ENCODE measurements at regions of chr11 and their contacts with region 1.

Region 1: DNA sequence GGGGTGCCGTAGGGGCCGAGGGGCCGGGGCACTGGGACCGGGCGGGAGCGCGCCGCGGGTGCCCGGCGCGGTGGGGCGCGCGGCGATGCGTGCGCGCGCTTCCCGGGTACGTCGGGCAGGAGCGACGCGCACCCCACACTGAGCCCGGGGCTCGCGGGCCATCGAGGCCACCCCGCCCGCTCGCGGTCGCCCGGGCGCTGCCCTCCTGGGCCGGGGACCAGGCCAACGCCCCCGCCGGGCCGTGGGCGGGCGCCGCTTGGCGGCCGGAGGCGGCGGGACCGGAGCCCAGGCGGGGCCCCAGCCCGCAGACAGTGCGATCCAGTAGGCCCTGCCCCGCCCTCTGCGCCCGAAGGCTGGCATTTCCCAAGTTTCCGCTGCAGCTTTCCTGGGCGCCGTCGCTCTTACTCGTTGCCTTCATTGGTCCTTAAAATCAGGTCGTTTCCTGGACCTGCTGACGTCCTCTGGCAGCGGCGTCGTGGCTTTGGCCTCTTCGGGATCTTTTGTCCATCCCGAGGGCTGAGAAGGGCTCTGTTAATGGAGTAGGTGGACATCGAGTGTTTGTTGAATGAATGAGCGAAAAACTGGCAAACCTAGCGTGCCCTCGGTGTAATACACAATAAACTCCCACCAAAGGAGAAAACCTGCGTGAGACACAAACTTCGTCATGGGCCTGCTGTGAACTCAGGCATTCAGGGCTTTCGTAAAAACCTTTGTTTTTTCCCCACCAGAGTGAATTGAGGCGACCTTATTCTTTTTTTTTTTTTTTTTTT is 638 bp downstream of the PARVA start:
- DNase-seq: no peak
- H3K4me3 ChIP-seq: peak overlapping the region; percentile 89
- H3K27ac ChIP-seq: peak overlapping the region; percentile 98
- H3K27me3 ChIP-seq: no peaks in the 10 kb centered on the region
- CTCF ChIP-seq: 0 out of 2 replicates have a peak, but pooled peaks have one; percentile 5

Region 2: DNA sequence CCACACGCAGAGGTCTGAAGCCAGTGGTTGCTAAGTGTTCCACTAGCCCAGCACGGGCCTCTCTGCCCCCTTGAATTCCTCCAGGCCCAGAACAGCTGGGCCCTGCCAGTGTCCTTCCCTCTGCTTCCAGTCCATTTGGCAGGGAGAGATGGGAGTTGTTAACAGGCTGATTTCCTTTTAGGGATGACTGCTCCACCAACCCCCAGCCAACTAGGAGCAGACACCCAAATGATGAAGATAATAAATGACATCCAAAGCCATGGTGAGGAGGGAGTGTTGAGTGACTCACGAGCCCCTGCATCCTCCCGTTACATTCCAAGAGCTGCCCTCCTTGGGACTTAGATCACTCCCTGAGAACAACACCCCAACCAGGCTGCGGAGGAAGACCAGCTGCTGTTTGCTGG is 19.9 kb after region 1 on chr11:
- CTCF ChIA-PET with region 1: interaction called, 3 read pairs
- POLR2A ChIA-PET with region 1: interaction called, 24 read pairs
- DNase-seq: peak; percentile 98
- H3K4me3 ChIP-seq: no peak overlapping the region
- H3K27ac ChIP-seq: peak overlapping the region; percentile 87
- H3K27me3 ChIP-seq: no peaks in the 10 kb centered on the region
- CTCF ChIP-seq: no peak

Region 3: DNA sequence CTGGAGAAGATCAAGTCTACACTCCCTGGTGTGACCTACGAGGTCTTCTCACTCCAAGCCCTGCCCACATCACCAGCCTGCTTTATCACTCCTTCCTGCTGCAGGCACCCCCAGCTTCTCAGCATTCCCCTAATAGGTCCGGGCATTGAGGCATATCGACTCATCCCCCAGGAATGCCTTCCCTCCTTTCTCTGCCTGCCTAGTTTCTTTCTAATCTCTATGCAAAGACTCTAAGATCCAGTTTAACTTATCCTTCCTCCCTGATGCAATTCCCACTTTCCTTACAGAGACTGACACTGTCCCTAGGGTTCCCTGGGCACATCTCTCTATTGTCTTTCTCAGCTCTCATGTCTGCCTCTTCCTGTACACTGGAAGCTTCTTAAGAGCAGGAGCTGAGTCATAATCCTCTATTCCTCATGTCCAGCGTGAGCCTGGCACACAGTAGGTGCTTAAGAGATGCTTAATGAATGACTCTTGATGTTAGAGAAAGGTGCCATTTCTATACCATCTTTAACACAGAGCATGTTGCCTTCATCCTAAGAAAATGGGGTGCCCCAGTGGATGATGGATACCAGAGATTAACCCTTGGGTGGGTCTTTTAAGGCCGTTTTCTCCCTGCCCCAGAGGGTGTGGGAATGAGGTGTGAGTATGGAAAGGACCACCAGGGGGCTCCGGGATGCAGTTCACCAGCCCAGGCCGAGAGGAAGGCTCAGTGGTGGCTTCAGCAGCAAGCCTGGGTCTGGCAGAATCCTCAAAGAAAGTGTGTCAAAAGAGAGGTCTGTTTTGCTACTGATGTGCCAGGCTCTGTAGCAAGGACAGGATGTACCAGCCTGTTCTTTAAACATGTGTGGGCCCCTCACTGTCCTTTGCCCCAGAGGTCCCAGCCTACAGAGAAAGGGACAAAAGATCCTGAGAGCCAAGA is 34.1 kb after region 1 on chr11:
- CTCF ChIA-PET with region 1: no interaction called
- POLR2A ChIA-PET with region 1: interaction called, 14 read pairs
- DNase-seq: peak; percentile 85
- H3K4me3 ChIP-seq: no peak overlapping the region
- H3K27ac ChIP-seq: peak overlapping the region; percentile 97
- H3K27me3 ChIP-seq: no peaks in the 10 kb centered on the region
- CTCF ChIP-seq: peak; percentile 85

Region 4: DNA sequence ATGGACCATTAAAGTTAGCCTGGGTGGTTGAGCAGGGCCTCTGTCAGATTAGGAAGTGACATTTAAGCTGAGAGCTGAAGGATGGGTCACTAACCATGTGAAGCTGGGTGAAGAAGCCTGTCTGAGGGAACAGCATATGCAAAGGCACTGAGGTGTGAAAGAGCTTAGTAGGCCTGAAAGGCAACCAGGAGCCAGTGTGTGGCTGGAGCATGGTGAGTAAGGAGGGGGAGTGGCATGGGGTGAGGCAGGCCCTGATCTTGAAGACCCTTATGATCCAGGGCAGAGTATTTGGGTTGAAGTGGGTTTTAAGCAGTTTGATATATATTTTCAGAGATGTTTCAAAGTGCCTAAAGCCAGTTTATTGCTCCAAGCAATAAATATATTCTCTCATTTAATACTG is 48.2 kb after region 1 on chr11:
- CTCF ChIA-PET with region 1: no interaction called
- POLR2A ChIA-PET with region 1: no interaction called
- DNase-seq: no peak
- H3K4me3 ChIP-seq: no peak overlapping the region
- H3K27ac ChIP-seq: no peak overlapping the region
- H3K27me3 ChIP-seq: no peaks in the 10 kb centered on the region
- CTCF ChIP-seq: no peak

Region 5: DNA sequence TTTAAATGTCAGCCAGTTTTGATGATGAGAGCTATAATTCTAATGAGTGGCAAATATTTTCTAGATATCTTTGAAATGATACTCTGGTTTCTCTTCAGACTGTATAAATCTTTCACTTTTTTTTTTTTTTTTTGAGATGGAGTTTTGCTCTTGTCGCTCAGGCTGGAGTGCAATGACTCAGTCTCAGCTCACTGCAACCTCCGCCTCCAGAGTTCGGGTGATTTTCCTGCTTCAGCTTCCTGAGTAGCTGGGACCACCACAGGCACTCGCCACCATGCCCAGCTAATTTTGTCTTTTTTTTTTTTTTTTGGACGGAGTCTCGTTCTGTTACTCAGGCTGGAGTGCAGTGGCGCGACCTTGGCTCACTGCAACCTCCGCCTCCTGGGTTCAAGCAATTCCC is 409.8 kb after region 1 on chr11:
- CTCF ChIA-PET with region 1: no interaction called
- POLR2A ChIA-PET with region 1: no interaction called
- DNase-seq: no peak
- H3K4me3 ChIP-seq: no peak overlapping the region
- H3K27ac ChIP-seq: no peak overlapping the region
- H3K27me3 ChIP-seq: no peaks in the 10 kb centered on the region
- CTCF ChIP-seq: no peak